Heart right ventricle (tissue), 16 donors: ENCODE measurements at regions of chrX and their contacts with region 1.

Region 1: DNA sequence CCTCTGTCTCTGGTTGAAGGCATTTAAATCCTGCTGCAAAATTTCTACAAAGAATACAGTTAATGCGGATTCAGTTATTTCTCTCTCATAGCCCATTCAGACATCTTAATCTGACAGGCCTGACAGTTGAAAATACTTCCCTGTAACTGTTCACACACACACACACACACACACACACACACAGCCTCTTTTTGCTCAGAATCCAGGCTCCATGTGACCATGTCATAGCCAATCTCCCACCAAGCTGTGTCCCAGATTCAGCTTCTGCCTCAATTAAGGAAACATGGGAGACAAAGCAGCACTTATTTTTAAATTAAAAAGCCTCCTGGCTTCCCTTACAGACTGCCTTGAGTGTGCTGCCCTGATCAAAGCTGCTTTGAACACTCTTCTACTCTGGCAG is 49.3 kb upstream of the EFHC2 start:
- DNase-seq: no peak
- ATAC-seq: no peak
- H3K4me3 ChIP-seq: no peak overlapping the region
- H3K27ac ChIP-seq: no peak overlapping the region
- H3K4me1 ChIP-seq: no peaks in the 10 kb centered on the region
- H3K27me3 ChIP-seq: peaks cover 0 to 4% (median 0%) of the 10 kb centered on the region in 7 donors
- CTCF ChIP-seq: no peak

Region 2: GRCh38 chrX:44415639-44416386 is 23.0 kb after region 1 on chrX:
- intact Hi-C with region 1: loop called in 1 of 10 experiments (anchors 1 kb)
- DNase-seq: no peak
- ATAC-seq: no peak
- H3K4me3 ChIP-seq: no peak overlapping the region
- H3K27ac ChIP-seq: no peak overlapping the region
- H3K4me1 ChIP-seq: no peaks in the 10 kb centered on the region
- H3K27me3 ChIP-seq: peaks cover 0 to 32% (median 0%) of the 10 kb centered on the region in 7 donors
- CTCF ChIP-seq: no peak